HCT116 (cell line): ENCODE measurements at regions of chr7 and their contacts with region 1.

Region 1: DNA sequence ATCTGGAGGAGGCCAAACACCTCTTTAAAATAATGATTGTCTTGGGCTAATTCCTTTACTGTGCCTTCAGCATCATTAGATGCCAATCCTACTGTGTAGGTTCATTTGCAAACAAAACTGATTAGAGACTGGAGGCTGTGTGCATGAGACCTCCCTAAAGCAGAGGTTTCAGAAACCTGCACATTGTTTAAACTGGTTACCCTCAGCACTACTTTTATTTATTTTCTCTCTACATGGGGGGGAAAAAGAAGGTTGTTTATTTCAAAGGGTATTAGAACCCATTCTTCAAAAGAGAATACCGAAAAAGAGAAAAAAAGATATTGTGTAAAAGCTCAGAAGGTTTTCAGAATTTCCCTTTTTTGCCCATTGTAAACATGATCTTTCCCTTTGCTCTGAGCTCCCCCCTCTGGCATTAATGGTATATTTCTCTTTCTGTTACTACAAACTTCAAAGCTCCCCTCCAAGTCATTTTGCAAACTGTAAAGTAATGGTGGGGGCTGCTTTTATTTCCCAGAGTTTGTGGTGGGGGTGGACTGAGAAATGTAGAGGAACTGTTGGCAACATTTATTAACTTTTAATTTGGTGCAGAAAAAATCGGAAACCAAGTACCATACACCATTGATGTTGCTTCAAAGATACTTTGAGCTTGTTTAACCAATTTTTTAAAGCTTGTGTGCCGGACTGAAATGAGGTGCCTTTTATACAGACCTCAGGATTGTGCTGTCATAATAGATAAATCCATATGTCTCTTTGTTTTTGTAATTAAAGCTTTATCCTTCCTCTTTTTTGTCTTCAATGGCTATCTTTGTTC is 181.4 kb downstream of the EXOC4 start:
- DNase-seq: no peak
- ATAC-seq: no peak
- H3K4me3 ChIP-seq: no peak overlapping the region
- H3K27ac ChIP-seq: no peak overlapping the region
- H3K4me1 ChIP-seq: no peaks in the 10 kb centered on the region
- H3K27me3 ChIP-seq: no peaks in the 10 kb centered on the region
- CTCF ChIP-seq: peak in 2 of 3 experiments; percentile 20 to 41; a peak in 2 of 6 replicates
- POLR2A ChIP-seq: no peak
- RAD21 ChIP-seq: peak; percentile 61

Region 2: DNA sequence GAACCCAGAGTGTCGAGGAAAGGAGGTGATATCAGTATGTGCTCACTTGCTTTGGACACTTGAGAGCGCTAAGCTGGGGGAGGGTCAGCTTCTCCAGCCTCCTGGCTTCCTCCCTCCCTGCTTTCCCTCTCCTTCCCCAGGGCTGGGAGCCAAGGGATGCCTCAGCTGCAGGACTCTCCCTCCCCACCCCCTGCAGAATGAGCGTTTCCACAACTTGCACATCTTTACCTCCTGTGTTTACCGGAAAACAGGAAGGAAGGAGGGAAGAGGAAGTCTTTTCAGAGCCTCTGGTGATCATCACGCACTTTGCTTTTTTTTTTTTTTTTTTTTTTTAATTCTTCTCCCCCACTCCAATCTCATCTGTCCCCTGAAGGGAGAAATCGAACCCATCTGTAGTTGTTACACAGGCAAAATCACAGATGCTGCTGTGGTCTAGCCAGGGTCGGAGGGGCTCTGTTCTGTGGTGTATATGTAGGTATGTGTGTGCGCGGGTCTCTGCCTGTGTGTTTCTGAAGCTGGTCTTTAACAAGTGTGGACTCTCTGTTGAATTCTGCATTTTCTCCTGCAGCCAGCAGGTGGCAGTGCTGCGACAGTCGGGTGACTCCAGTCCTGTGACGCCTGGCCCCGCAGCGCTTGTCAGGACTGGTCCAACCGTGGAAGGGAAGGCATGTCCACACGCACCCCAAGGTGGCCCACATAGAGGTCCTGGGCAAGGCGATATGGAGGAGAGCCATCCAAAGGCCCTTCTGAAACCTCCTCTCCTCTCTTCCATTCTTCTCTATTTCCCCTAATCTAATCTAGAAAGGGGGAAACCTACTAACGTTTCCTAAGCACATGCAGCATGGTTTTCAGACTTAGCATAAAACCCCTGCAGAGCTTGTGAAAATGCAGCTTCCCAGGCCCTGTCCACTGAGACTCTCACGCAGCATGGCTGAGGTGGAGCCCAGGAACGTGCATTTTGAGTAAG is 1115.6 kb before region 1 on chr7:
- CTCF ChIA-PET with region 1: no interaction called
- POLR2A ChIA-PET with region 1: no interaction called
- RAD21 ChIA-PET with region 1: no interaction called
- intact Hi-C with region 1: loop called (anchors 5 kb)
- DNase-seq: peak; percentile 68
- ATAC-seq: peak; percentile 99
- H3K4me3 ChIP-seq: no peak overlapping the region
- H3K27ac ChIP-seq: no peak overlapping the region
- H3K4me1 ChIP-seq: 0 out of 4 replicates have a peak, but pooled peaks cover 0 to 3% of the 10 kb centered on the region in 2 experiments
- H3K27me3 ChIP-seq: peaks cover 52% of the 10 kb centered on the region
- CTCF ChIP-seq: peak; percentile 74 to 82 (median 75)
- POLR2A ChIP-seq: no peak
- RAD21 ChIP-seq: peak; percentile 82

Region 3: GRCh38 chr7:132655131-132655727 is 779.0 kb before region 1 on chr7:
- CTCF ChIA-PET with region 1: interaction called, 4 read pairs
- POLR2A ChIA-PET with region 1: no interaction called
- RAD21 ChIA-PET with region 1: no interaction called
- intact Hi-C with region 1: loop called (anchors 5 kb)
- DNase-seq: no peak
- ATAC-seq: no peak
- H3K4me3 ChIP-seq: no peak overlapping the region
- H3K27ac ChIP-seq: no peak overlapping the region
- H3K4me1 ChIP-seq: 0 out of 4 replicates have a peak, but pooled peaks cover 0 to 2% of the 10 kb centered on the region in 2 experiments
- H3K27me3 ChIP-seq: no peaks in the 10 kb centered on the region
- CTCF ChIP-seq: no peak
- POLR2A ChIP-seq: no peak
- RAD21 ChIP-seq: no peak